CD14-positive monocyte (primary cell): ENCODE measurements at regions of chr17 and their contacts with region 1.

Region 1: GRCh38 chr17:78789663-78790181 is 7.6 kb upstream of the CYTH1 start:
- DNase-seq: no peak
- H3K4me3 ChIP-seq: no peak overlapping the region
- H3K4me3 Mint-ChIP-seq: peak overlapping the region; percentile 5 to 6
- H3K27ac ChIP-seq: peak overlapping the region; percentile 17 to 40
- H3K27ac Mint-ChIP-seq: peak overlapping the region; percentile 27 to 83 (median 52)
- H3K4me1 ChIP-seq: peaks cover 11 to 24% of the 10 kb centered on the region in 2 donors
- H3K4me1 Mint-ChIP-seq: peaks cover 26% of the 10 kb centered on the region
- H3K27me3 ChIP-seq: no peaks in the 10 kb centered on the region
- H3K27me3 Mint-ChIP-seq: peaks cover 0 to 2% (median 0%) of the 10 kb centered on the region in 3 donors
- CTCF ChIP-seq: no peak

Region 2: DNA sequence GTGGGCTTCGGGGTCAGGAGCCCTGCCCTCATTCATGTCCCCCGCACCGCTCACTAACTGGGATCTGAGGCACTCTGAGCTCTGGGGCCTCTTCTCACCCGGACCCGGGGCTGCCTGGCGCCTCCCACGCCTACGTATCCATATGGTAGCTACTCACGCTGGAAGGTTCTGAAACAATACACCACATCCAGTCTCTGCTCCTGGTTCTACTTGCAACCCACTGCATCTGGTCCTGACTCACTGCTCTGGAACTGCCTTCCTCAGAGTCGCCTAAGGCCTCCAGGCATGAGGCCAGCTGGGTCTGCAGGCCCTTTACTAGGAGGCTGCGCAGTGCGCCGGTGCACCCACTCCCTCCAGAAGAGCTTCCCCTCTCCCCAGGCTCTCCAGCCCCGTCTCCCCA is 32.8 kb after region 1 on chr17:
- intact Hi-C with region 1: loop called in 1 of 2 experiments (anchors 5 kb)
- DNase-seq: no peak
- H3K4me3 ChIP-seq: no peak overlapping the region
- H3K4me3 Mint-ChIP-seq: no peak overlapping the region
- H3K27ac ChIP-seq: no peak overlapping the region
- H3K27ac Mint-ChIP-seq: peak overlapping the region in 1 of 7 donors; percentile 37
- H3K4me1 ChIP-seq: peaks cover 23 to 25% of the 10 kb centered on the region in 2 donors
- H3K4me1 Mint-ChIP-seq: peaks cover 33% of the 10 kb centered on the region
- H3K27me3 ChIP-seq: no peaks in the 10 kb centered on the region
- H3K27me3 Mint-ChIP-seq: peaks cover 0 to 2% (median 0%) of the 10 kb centered on the region in 3 donors
- CTCF ChIP-seq: no peak